ENCODE measurements at regions of chr4 and their contacts with region 1.

Region 1: GRCh38 chr4:163681208-163681821 is 186.8 kb downstream of the TMA16 start:
- DNase-seq: peak; percentile 26
- H3K4me3 Mint-ChIP-seq: no peak overlapping the region
- H3K27ac Mint-ChIP-seq: no peak overlapping the region
- H3K4me1 Mint-ChIP-seq: no peaks in the 10 kb centered on the region
- H3K27me3 Mint-ChIP-seq: no peaks in the 10 kb centered on the region
- CTCF ChIP-seq: peak; percentile 24

Region 2: DNA sequence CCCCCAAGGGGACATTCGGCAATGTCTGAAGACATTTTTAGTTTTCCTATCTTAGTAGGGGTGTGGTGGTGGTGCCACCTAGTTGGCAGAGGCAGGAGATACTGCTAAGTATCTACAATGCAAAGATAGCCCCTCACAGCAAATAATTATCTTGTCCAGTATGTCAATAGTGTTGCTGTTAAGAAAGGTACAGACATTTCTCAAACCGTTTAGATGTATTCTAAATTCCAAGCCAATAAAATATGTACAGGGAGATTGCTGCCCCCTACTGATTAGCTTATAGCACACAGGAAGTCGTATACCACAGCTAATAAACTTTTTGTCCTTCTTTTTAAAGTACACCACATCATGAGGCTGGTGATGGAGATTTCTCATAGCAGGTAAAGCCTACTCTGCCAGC is 73.7 kb after region 1 on chr4:
- CTCF ChIA-PET with region 1: no interaction called
- intact Hi-C with region 1: loop called (anchors 1 kb)
- DNase-seq: no peak
- H3K4me3 Mint-ChIP-seq: no peak overlapping the region
- H3K27ac Mint-ChIP-seq: no peak overlapping the region
- H3K4me1 Mint-ChIP-seq: no peaks in the 10 kb centered on the region
- H3K27me3 Mint-ChIP-seq: no peaks in the 10 kb centered on the region
- CTCF ChIP-seq: peak; percentile 32

Region 3: DNA sequence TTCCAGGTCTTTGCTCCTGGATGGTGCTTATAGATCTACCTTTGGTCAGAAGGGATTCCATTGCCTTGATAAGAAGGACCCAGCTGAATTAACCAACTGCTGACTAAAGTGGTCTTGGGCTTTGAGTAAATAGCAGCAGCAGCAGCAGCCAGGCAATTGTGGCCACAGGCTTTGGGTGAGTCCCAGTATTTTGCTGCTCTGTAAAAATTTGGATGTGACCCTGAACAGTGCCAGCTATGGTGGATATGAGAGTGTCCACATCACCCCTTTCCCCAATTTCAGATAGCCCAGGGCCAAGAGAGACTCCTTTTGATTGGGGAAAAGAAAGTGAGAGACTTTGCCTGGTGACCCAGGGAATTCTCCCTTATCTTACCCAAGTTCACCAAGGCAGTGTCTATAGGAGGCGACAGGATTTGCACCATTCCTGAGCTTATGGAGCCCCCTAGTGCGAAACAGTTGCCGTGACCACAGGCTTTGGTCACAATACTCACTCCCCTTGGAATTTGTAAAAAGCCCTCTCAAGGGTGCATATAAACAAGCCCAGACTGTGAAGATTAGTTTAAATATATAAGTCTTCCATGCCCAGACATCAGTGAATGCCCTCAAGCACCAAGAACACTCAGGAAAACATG is 331.2 kb after region 1 on chr4:
- CTCF ChIA-PET with region 1: interaction called, 3 read pairs
- intact Hi-C with region 1: loop called (anchors 1 kb)
- DNase-seq: peak; percentile 39
- H3K4me3 Mint-ChIP-seq: no peak overlapping the region
- H3K27ac Mint-ChIP-seq: no peak overlapping the region
- H3K4me1 Mint-ChIP-seq: no peaks in the 10 kb centered on the region
- H3K27me3 Mint-ChIP-seq: no peaks in the 10 kb centered on the region
- CTCF ChIP-seq: peak; percentile 35

Region 4: DNA sequence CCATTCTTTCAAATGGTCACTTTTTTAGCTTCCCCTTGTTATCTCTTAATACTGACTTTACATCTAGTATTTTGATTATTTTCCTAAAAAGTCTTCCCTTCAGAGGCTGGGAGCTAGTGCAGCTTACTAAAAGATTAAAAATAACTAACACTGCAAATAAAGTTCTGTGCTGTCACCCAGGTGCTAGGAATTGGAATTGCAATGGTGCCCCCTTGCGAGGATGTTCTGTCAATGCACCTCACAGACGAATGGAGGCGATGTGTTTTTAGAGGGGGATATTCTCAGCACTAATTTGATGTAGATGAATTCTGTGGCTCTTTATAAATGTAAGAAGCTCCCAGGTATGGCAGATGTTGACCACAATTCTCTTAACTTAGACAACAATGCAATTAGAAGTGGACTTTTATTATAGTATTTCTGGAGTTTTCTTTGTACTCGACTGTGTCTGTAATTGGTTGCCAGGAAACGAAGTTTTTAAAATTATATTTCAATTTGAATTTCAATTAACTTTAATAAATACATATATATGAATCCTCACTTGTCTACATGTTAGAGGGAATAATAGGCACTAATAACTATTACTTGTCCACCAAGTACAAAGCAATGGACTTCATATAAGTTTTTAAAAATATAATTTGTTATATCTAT is 1050.6 kb after region 1 on chr4:
- CTCF ChIA-PET with region 1: no interaction called
- intact Hi-C with region 1: loop called (anchors 5 kb)
- DNase-seq: peak; percentile 65
- H3K4me3 Mint-ChIP-seq: no peak overlapping the region
- H3K27ac Mint-ChIP-seq: no peak overlapping the region
- H3K4me1 Mint-ChIP-seq: no peaks in the 10 kb centered on the region
- H3K27me3 Mint-ChIP-seq: no peaks in the 10 kb centered on the region
- CTCF ChIP-seq: peak; percentile 53